Prostate gland (tissue), 2 donors: ENCODE measurements at regions of chr2 and their contacts with region 1.

Region 1: GRCh38 chr2:47334356-47335136 is 68.4 kb upstream of the MSH2 start:
- DNase-seq: no peak
- H3K4me3 ChIP-seq: no peak overlapping the region
- H3K27ac ChIP-seq: no peak overlapping the region
- H3K4me1 ChIP-seq: no peaks in the 10 kb centered on the region
- H3K27me3 ChIP-seq: no peaks in the 10 kb centered on the region
- CTCF ChIP-seq: no peak
- POLR2A ChIP-seq: no peak

Region 2: GRCh38 chr2:47388888-47389287 is 54.3 kb after region 1 on chr2:
- intact Hi-C with region 1: loop called (anchors 1 kb)
- DNase-seq: no peak
- H3K4me3 ChIP-seq: no peak overlapping the region
- H3K27ac ChIP-seq: no peak overlapping the region
- H3K4me1 ChIP-seq: no peaks in the 10 kb centered on the region
- H3K27me3 ChIP-seq: no peaks in the 10 kb centered on the region
- CTCF ChIP-seq: no peak
- POLR2A ChIP-seq: no peak

Region 3: DNA sequence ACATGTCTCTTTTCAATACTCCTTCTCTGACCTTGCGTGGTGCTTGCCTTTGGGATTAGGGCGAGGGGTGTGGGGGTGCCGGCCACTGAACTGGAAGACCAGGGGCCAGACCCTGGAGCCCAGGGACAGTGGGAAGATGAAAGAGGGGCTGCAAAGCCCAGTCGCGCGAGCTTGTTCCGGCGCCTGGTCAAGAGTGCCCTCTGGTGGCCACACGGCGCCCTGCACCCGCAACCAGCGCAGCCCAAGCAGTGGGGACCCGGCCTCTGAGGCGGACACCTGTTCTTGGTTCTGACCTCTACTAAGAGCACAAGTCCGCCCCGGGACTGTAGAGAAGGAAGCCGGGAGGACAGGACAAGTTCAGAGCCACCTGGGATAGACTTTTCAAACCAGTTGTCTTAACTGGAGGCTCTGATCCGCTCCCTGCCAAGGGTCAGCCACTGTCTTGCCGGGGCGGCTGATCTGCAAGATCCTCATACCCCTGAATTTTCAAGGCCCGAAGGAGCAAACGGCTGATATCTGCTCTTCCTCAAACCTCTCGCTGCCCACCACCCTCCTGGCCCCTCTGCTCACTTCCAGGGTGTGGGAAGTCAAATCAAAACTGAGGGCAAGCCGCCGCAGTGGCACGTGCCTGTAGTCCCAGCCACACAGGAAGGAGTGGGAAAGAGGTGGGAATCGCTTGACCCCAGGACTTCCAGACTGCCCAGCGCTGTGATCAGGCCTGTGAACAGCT is 433.5 kb after region 1 on chr2:
- intact Hi-C with region 1: loop called (anchors 5 kb)
- DNase-seq: peak; percentile 38
- H3K4me3 ChIP-seq: no peak overlapping the region
- H3K27ac ChIP-seq: no peak overlapping the region
- H3K4me1 ChIP-seq: no peaks in the 10 kb centered on the region
- H3K27me3 ChIP-seq: no peaks in the 10 kb centered on the region
- CTCF ChIP-seq: peak; percentile 91 to 96 (median 94)
- POLR2A ChIP-seq: no peak